ENCODE measurements at regions of chr4 and their contacts with region 1.

Region 1: DNA sequence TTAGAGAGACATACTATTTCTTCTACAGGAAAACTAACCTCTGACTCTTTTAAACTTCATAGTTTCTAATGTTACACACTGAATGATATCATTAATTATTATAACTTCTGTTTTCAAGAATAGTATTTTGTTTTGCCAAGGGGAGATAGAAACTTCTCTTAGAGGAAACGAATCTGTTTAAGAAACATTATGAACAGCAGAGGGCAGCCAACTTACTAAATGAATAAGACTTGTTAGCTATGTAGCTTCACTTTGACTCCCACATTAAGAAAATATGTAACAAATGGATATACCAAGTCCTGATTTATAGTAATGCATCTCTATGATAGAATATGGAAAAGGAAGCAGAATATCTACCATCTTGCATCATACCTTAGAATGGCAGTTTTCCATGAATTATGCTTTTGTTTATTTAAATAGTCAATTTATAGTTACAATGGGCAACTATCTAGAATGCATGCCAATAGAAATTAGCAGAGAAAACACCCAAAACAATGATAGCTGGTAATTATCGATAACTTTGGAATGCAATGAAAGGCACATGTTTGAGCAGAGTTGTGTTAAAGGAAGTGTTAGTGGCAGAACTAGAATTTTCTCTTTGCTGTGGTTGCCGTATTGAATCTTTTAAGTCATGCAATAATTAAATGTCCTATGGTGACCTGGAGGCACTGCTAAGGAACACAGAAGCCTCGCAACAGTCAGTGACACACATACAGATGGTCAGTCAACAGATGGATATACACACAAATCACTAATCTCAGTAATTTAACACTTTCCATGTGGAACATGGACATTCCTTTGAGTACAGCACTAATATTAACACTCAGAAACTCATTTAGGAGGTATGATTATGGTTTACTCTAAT is 105.7 kb upstream of the PDLIM3 start:
- DNase-seq: no peak
- H3K4me3 Mint-ChIP-seq: no peak overlapping the region
- H3K27ac Mint-ChIP-seq: no peak overlapping the region
- H3K4me1 Mint-ChIP-seq: peaks cover 7% of the 10 kb centered on the region
- H3K27me3 Mint-ChIP-seq: peaks cover 31% of the 10 kb centered on the region

Region 2: DNA sequence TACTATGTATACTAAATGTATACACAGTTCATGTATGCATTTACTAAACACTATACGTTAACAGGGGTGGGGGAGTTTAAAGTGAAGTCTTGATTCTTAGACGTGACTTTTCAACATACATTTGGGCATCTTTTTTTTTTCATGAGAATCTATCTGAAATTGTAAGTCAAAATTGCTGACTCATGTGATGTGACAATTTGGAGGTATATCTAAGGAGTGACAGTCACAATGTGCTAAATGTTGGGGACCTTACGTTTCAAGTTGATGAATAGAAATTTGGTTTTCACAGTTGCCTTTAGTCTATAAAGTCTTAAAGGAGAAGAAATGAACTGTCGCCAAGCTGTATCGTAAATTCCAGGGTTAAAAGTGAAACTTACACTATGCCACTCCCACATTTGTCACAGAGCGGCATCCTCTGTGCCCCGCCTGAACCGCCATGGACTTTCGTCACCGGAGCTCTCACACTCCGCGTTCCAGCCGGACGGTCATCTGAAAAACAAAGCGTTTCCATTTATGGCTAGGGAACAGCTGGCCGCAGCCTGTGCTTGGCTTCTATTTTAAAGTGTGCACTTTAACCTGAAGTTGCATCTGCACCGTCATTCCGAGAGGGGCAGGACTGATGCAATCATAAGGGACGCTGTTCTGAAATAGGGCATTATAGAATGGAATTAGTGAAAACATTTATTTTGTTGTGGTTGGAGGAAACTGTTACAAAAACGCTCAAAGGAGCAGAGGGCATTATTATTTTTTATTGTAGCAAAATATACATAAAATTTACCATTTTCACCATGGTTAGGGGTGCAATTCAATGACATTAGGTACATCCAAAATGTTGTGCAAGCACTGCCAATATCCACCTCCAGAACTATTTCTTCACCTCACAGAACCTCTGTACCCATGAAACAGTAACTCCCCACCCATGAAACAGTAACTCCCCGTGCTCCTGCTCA is 136.7 kb before region 1 on chr4:
- CTCF ChIA-PET with region 1: no interaction called
- intact Hi-C with region 1: no loop called
- DNase-seq: no peak
- H3K4me3 Mint-ChIP-seq: no peak overlapping the region
- H3K27ac Mint-ChIP-seq: no peak overlapping the region
- H3K4me1 Mint-ChIP-seq: no peaks in the 10 kb centered on the region
- H3K27me3 Mint-ChIP-seq: peaks cover 22% of the 10 kb centered on the region

Region 3: DNA sequence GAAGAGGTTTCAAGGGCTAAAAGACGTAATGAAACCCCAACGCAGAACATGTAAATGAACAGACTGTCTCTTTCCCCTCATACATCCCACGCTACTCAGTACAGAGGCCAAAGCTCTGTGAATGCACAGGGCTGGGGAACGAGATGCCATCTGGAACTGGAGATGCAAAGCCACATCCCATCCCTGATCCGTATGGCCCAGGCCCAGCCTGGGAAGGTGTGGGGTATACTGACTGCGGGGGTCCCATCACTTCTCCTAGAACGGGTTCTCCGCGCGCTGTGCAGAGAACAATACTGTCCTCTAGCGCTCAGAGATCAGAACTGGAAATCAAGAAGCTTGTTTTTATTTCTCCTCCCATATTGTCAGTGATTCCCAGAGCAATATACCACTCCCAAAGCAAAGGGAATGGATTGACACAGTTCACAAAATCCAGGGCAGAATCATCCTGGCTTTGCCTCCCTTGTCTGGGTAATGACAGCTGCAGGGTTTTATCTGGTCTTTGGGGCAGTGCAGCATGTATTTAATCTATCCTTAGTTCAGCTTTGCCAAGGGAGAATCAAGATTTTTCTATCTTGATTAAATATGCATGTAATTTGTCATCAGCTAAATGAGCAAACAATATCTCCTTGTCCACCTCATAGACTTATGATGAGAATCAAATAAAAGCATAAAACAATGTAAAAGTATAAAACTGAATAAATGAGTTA is 380.6 kb after region 1 on chr4:
- CTCF ChIA-PET with region 1: interaction called, 6 read pairs
- intact Hi-C with region 1: loop called (anchors 5 kb)
- DNase-seq: peak; percentile 8
- H3K4me3 Mint-ChIP-seq: no peak overlapping the region
- H3K27ac Mint-ChIP-seq: no peak overlapping the region
- H3K4me1 Mint-ChIP-seq: no peaks in the 10 kb centered on the region
- H3K27me3 Mint-ChIP-seq: peaks cover 19% of the 10 kb centered on the region

Region 4: GRCh38 chr4:186037692-186038658 is 396.9 kb after region 1 on chr4:
- CTCF ChIA-PET with region 1: interaction called, 25 read pairs
- intact Hi-C with region 1: loop called (anchors 1 kb)
- DNase-seq: peak; percentile 51
- H3K4me3 Mint-ChIP-seq: no peak overlapping the region
- H3K27ac Mint-ChIP-seq: no peak overlapping the region
- H3K4me1 Mint-ChIP-seq: no peaks in the 10 kb centered on the region
- H3K27me3 Mint-ChIP-seq: peaks cover 31% of the 10 kb centered on the region

Region 5: DNA sequence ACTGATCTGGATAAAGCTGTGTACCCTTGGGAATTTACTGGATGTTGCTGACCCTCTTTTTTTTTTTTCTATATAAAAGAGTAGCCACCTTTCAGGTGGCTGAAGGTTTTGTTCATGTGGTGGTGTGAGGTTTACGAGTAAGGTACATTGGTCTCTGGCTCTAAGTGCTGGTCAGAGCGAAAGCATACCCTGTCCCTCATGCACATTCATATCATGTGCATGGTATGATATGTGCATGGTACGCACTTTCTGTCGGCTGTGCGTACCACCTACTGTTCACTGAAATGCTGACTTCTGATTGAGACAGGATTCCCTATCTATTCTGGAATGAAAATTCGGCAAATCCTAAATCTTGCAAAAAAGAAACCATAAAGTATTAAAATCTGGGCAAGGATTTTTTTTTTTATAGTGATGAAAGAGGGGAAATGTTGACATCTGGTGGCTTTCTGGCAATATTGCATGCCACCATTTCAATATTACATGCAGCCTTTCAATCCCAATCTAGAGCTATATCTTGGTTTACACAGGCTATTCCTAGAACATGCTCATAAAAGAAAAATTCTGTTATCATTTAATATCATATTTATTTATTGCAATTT is 496.3 kb after region 1 on chr4:
- CTCF ChIA-PET with region 1: interaction called, 7 read pairs
- intact Hi-C with region 1: loop called (anchors 5 kb)
- DNase-seq: no peak
- H3K4me3 Mint-ChIP-seq: no peak overlapping the region
- H3K27ac Mint-ChIP-seq: no peak overlapping the region
- H3K4me1 Mint-ChIP-seq: peaks cover 6% of the 10 kb centered on the region
- H3K27me3 Mint-ChIP-seq: no peaks in the 10 kb centered on the region

Region 6: DNA sequence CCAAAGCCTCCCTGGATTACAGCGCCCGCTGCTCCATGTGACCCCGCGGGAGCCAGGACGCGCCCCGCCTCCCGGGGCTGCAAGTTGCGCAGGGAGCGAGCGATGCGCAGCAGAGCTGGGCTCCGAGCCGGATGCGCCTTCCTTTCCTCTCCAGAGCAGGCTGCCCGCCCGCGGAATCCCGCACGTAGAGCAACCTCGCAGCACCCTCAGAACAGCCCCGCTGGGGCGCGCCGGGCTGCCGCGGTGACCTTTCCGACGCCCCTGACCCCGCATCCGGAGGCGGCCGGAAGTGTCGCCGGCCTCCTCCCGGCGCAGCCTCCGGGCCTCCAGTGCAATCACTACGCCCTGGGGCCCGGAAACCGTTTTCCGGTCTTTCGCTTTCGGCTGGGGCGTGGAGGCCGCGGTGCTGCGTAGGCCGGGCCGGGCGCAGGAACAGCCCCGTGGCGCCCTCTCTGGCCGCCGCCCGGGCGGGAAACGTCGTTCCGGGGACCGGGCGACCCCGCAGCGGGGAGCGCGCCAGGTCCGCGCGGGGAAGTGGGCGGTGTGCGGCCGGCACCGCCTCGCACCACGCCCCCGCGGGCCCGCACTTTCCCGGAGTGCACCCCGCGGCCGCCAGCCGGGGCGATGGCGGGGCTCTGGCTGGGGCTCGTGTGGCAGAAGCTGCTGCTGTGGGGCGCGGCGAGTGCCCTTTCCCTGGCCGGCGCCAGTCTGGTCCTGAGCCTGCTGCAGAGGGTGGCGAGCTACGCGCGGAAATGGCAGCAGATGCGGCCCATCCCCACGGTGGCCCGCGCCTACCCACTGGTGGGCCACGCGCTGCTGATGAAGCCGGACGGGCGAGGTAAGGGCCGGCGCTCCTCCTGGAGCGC is 550.4 kb after region 1 on chr4 and contains the start of gene CYP4V2:
- CTCF ChIA-PET with region 1: no interaction called
- intact Hi-C with region 1: no loop called
- DNase-seq: peak; percentile 88
- H3K4me3 Mint-ChIP-seq: peak within 1 kb of the TSS; percentile 86
- H3K27ac Mint-ChIP-seq: peak within 1 kb of the TSS; percentile 92
- H3K4me1 Mint-ChIP-seq: peaks cover 33% of the 10 kb centered on the region
- H3K27me3 Mint-ChIP-seq: no peaks in the 10 kb centered on the region
- total RNA-seq, gene CYP4V2: 3.3 TPM

Region 7: GRCh38 chr4:186366326-186366725 is 725.3 kb after region 1 on chr4:
- CTCF ChIA-PET with region 1: no interaction called
- intact Hi-C with region 1: no loop called
- DNase-seq: no peak
- H3K4me3 Mint-ChIP-seq: no peak overlapping the region
- H3K27ac Mint-ChIP-seq: no peak overlapping the region
- H3K4me1 Mint-ChIP-seq: no peaks in the 10 kb centered on the region
- H3K27me3 Mint-ChIP-seq: no peaks in the 10 kb centered on the region